ENCODE measurements at regions of chr10 and their contacts with region 1.

Region 1: GRCh38 chr10:131068760-131069159 is 242.8 kb downstream of the TCERG1L start:
- DNase-seq: no peak
- ATAC-seq: no peak
- H3K4me3 ChIP-seq: no peak overlapping the region
- H3K27ac ChIP-seq: no peak overlapping the region
- H3K4me1 ChIP-seq: no peaks in the 10 kb centered on the region
- H3K27me3 ChIP-seq: no peaks in the 10 kb centered on the region
- CTCF ChIP-seq: no peak

Region 2: GRCh38 chr10:131187274-131187673 is 118.5 kb after region 1 on chr10:
- CTCF ChIA-PET with region 1: no interaction called
- POLR2A ChIA-PET with region 1: interaction called, 12 read pairs
- intact Hi-C with region 1: no loop called
- DNase-seq: no peak
- ATAC-seq: no peak
- H3K4me3 ChIP-seq: no peak overlapping the region
- H3K27ac ChIP-seq: no peak overlapping the region
- H3K4me1 ChIP-seq: no peaks in the 10 kb centered on the region
- H3K27me3 ChIP-seq: no peaks in the 10 kb centered on the region
- CTCF ChIP-seq: no peak

Measured in PC-3 (cell line).